ENCODE measurements at regions of chr3 and their contacts with region 1.

Region 1: DNA sequence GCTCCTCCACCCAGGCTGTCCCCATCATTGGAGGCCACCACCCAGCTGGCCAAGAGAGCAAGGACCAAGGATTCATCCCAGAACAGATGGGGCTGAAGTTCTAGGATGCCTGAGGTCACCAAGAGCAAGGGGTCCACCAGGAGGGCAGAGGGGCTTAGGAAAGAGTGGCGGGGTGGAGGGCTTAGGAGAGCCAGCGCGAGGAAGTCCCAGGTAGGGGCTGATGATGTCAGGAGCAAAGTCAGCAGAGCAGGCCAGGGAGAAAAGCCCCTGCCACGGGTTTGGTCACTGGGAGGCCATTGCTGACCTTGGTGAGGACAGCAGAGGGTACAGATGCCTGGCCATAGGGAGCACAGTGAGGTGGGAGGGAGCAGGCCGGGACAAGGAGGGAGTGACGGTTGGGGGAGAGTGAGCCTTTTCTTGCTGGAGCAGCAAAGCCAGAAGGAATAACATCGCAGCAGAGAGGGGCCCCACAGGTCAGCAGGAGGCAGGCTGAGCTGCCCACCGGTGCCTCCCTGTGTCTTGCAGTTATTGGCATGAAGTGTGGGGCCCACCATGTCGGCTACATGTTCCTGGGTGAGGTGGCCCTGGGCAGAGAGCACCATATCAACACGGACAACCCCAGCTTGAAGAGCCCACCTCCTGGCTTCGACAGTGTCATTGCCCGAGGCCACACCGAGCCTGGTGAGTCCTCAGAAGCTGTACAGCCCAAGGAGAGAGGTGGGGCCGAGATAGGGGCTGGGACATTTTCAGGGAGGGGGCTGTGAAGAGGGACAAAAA is 5.2 kb downstream of the PARP3 start:
- DNase-seq: no peak
- H3K4me3 ChIP-seq: no peak overlapping the region
- CTCF ChIP-seq: no peak

Region 2: GRCh38 chr3:51974963-51975851 is 27.8 kb after region 1 on chr3 and contains the start of gene ABHD14A:
- CTCF ChIA-PET with region 1: interaction called, 74 read pairs
- POLR2A ChIA-PET with region 1: interaction called, 8 read pairs
- DNase-seq: no peak
- H3K4me3 ChIP-seq: peak within 1 kb of the TSS; percentile 89
- CTCF ChIP-seq: no peak

Measured in AG04449 (cell line).